Tibial artery (tissue), 4 donors: ENCODE measurements at regions of chr3 and their contacts with region 1.

Region 1: DNA sequence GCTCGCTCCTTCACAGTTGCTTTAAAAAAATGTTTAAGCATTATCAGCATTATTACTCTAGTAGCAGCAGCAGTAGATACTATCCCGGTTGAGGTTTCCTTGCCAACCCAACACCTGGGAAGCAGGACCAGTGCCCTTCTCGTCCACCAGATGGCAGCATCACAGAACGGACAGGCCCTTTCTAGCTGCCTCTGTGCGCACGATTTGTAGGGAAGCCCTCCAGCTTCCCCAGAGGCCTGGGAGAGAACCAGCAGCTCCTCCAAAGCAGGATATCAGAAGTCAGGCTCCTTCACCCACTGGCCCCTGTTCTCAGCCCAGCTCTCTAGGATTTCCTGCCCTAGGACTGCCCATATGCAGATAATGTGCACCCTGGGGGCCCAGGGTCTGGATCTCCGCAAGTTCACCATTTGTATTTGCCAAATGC is 16.8 kb upstream of the ESYT3 start:
- DNase-seq: peak; percentile 65 to 79
- H3K4me3 ChIP-seq: no peak overlapping the region
- H3K27ac ChIP-seq: no peak overlapping the region
- H3K4me1 ChIP-seq: no peaks in the 10 kb centered on the region
- H3K27me3 ChIP-seq: no peaks in the 10 kb centered on the region
- CTCF ChIP-seq: peak; percentile 82 to 92

Region 2: DNA sequence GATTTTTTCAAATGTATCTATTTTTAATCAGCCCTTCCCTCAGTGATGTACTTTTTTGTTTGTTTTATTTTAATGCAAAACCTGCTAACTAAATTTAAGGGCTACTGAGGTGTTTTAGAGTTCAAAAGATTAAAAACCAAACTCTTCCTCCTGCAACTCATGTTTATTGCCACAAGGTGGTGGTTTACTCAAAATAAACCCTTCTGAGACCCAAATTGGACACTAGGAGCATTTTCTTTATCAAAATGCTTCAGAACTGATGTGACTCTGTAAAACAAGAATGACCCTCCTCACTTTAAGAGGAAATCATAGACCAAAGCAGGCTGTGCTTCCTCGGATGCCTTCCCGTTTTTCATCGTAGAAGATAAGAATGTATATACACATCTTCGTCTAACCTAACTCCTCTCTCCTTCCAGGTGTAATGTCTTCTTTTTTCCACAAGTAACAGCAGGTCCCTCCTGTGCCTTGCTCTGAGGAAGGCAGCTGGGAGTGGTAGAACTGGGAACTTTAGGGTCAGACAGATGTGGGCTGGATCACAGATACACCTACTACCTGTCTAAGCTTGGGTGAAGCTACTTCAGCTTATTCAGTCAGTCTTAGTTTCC is 85.0 kb before region 1 on chr3:
- intact Hi-C with region 1: loop called (anchors 5 kb)
- DNase-seq: no peak
- H3K4me3 ChIP-seq: no peak overlapping the region
- H3K27ac ChIP-seq: no peak overlapping the region
- H3K4me1 ChIP-seq: peaks cover 0 to 18% (median 5%) of the 10 kb centered on the region in 4 donors
- H3K27me3 ChIP-seq: no peaks in the 10 kb centered on the region
- CTCF ChIP-seq: peak; percentile 57 to 71

Region 3: DNA sequence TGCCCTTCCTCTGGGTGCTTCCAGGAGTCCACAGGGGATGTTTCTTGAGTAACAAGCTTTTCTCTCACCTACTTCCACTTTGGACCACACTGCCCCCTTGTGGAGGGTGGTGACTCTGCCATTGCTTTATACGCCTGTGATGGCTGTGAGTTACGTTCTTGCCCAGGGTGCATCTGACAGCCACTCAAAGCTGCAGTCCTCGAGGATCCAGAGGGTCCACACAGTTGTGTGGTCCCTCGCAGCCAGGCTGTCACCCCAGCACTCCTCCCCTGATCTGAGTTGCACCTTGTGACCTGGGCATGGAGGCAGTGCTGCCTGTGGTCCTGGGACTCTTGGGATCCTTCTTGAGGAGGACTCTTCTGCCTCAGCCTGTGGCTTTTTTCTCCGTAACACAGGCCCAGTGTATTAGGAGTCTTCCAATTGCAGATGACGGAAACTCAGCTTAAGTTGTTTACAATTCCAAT is 506.0 kb after region 1 on chr3:
- intact Hi-C with region 1: loop called (anchors 10 kb)
- DNase-seq: peak; percentile 79 to 85
- H3K4me3 ChIP-seq: no peak overlapping the region
- H3K27ac ChIP-seq: no peak overlapping the region
- H3K4me1 ChIP-seq: peaks cover 0 to 12% (median 5%) of the 10 kb centered on the region in 4 donors
- H3K27me3 ChIP-seq: no peaks in the 10 kb centered on the region
- CTCF ChIP-seq: peak; percentile 68 to 83